ENCODE measurements at regions of chr6 and their contacts with region 1.

Region 1: DNA sequence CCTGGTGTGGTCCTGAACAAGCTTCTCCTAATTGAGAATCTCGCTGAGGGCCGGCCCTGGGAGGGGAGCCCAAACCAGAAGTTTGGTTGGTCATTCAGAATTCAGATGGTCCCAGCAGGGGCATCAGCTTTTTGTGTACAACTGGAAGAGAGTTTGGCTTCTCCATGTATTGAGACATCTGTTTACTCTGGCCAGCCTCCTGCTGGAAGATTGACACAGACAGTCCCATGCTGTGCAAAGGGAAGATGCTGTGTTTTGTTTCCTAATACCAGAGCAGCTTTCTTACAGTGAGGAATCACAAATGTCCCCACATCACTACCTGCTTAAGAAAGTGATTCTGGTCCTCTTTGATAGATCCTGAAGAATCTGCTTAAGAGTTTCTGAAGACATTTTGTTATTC is 97.8 kb downstream of the PLEKHG1 start:
- DNase-seq: peak in 1 of 2 experiments; percentile 30
- H3K4me3 ChIP-seq: no peak overlapping the region
- H3K4me3 Mint-ChIP-seq: no peak overlapping the region
- H3K27ac Mint-ChIP-seq: no peak overlapping the region
- H3K4me1 ChIP-seq: peaks cover 41% of the 10 kb centered on the region
- H3K4me1 Mint-ChIP-seq: peaks cover 36% of the 10 kb centered on the region
- H3K27me3 ChIP-seq: no peaks in the 10 kb centered on the region
- H3K27me3 Mint-ChIP-seq: no peaks in the 10 kb centered on the region
- CTCF ChIP-seq: no peak

Region 2: DNA sequence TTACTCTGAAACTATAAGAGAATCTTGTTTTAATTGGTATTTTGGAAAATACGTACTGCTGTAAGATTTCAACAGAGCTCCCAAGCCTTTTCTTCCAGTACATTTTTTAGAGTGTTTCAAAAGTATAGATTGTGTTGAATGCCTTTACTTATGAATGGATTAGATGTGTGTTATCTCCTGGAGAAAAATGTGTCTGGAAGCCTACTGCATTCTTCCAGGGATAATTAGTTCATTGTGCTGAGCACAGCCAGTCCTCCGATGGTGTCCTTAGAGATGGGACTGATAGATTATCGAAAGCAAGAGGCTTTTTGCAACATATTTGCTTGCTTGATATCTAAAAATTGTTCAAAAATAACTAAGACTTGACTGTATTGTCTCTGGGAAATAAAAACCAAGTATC is 16.4 kb after region 1 on chr6:
- CTCF ChIA-PET with region 1: interaction called, 4 read pairs
- POLR2A ChIA-PET with region 1: no interaction called
- intact Hi-C with region 1: loop called (anchors 1 kb)
- DNase-seq: no peak
- H3K4me3 ChIP-seq: no peak overlapping the region
- H3K4me3 Mint-ChIP-seq: peak overlapping the region; percentile 34
- H3K27ac Mint-ChIP-seq: peak overlapping the region; percentile 26
- H3K4me1 ChIP-seq: peaks cover 40% of the 10 kb centered on the region
- H3K4me1 Mint-ChIP-seq: peaks cover 51% of the 10 kb centered on the region
- H3K27me3 ChIP-seq: no peaks in the 10 kb centered on the region
- H3K27me3 Mint-ChIP-seq: no peaks in the 10 kb centered on the region
- CTCF ChIP-seq: no peak

Measured in Caco-2 (cell line).